ENCODE measurements at regions of chr12 and their contacts with region 1.

Region 1: DNA sequence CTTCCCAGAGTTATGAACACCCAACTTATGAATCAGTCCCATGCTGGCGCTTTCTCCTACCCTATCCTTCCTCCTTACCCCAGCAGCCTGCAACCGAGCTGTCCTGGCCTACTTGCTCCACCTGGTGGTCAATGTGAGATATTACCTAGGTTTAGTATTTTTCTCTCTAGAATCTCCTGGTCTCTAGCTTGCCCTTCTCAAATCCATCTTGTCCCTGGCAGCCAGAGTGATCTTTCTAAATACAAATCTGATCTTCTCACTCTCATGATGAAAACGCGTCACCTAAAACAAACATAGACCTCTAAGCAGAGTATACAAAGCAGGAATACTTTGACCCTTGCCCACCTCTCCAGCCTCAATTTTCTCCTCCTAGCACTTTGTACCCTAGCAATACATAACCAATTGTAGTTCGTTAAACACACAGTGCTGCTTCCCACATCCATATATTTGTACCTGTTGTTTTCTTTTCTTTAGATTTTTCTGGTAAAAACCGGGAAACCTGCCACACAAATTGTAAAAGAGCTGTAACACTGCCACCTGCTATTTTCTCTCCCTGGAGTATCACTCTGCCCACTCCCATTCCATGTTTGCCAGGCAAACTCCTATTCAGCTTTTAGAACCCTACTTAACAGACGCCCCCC is 20.0 kb upstream of the TCP11L2 start:
- DNase-seq: peak; percentile 65
- H3K4me3 Mint-ChIP-seq: no peak overlapping the region
- H3K27ac Mint-ChIP-seq: no peak overlapping the region
- H3K4me1 Mint-ChIP-seq: peaks cover 20% of the 10 kb centered on the region
- H3K27me3 Mint-ChIP-seq: peaks cover 1% of the 10 kb centered on the region

Region 2: GRCh38 chr12:105420659-105421240 is 861.8 kb before region 1 on chr12:
- CTCF ChIA-PET with region 1: no interaction called
- POLR2A ChIA-PET with region 1: no interaction called
- intact Hi-C with region 1: loop called (anchors 5 kb)
- DNase-seq: peak; percentile 75
- H3K4me3 Mint-ChIP-seq: no peak overlapping the region
- H3K27ac Mint-ChIP-seq: no peak overlapping the region
- H3K4me1 Mint-ChIP-seq: peaks cover 6% of the 10 kb centered on the region
- H3K27me3 Mint-ChIP-seq: no peaks in the 10 kb centered on the region

Region 3: GRCh38 chr12:106247674-106248311 is 34.8 kb before region 1 on chr12 and contains the start of gene CKAP4:
- CTCF ChIA-PET with region 1: interaction called, 7 read pairs
- POLR2A ChIA-PET with region 1: no interaction called
- intact Hi-C with region 1: loop called (anchors 2 kb)
- DNase-seq: peak; percentile 61
- H3K4me3 Mint-ChIP-seq: peak within 1 kb of the TSS; percentile 76
- H3K27ac Mint-ChIP-seq: peak within 1 kb of the TSS; percentile 69
- H3K4me1 Mint-ChIP-seq: peaks cover 24% of the 10 kb centered on the region
- H3K27me3 Mint-ChIP-seq: no peaks in the 10 kb centered on the region
- total RNA-seq, gene CKAP4: 18.5 to 19.0 TPM

Region 4: DNA sequence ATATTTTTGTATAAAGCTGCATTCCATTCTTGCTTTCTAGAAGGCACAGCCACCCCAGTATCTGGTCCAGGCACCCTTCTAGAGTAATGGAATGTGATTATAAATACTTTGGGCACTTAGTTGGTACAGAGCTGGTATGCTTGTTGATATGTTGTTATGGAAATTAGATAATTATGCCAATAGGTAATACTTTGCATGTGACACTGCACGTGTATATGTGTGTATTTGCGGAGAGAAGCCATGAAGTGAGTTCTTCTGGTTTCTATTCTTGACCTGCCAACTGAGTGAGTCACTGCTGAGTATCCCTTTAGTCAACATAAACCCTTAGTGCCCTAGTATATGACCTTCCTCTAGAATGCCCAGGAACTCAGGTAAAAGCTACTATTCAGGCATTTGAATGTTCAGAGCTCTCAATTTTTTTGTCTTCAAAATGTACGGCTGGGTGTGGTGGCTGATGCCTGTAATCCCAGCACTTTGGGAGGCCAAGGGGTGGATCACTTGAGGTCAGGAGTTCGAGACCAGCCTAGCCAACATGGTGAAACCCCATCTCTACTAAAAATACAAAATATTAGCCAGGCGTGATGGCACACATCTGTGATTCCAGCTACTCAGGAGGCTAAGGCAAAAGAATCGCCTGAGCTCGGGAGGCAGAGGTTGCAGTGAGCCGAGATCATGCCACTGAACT is 13.8 kb after region 1 on chr12:
- CTCF ChIA-PET with region 1: interaction called, 48 read pairs
- POLR2A ChIA-PET with region 1: no interaction called
- intact Hi-C with region 1: no loop called
- DNase-seq: no peak
- H3K4me3 Mint-ChIP-seq: no peak overlapping the region
- H3K27ac Mint-ChIP-seq: no peak overlapping the region
- H3K4me1 Mint-ChIP-seq: peaks cover 10% of the 10 kb centered on the region
- H3K27me3 Mint-ChIP-seq: no peaks in the 10 kb centered on the region

Region 5: DNA sequence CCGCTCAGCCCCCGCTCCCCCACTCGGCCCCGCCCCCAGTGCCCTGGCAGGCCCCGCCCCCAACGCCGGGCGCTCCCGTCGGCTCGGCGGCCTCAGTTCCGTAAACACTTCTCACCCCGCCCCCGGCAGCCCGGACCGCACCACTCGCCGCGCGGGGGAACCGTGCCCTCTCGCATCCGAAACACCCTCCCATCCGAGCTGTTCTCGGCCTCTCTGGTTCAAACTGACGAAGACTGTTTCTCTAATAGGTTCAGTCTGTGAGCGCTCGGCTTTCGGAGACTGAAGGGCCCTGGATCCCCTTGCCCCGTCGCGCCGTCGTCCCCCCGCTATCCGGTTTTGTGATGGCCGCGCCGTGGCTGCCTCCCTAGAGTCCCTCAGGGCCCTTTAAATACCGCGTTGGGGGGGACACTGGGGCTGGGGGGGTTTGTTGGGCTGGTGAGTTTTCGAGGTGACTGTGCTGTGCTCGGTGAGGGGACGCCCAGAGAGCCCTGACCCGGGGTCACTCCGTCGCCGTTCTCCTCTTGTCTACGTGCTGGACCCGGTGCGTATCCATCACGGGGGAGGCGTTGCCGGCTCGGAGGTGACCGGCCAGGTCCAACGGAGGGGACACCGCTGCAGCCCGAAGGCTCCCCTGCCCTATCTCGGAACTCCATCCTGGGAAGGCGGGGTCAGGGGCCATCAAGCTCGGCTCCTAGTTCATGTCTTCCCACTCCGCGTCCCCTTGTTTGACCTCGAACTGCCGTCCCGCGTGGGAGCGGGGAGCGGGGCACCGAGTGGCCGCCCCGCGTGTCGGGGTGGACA is 20.0 kb after region 1 on chr12 and contains the start of gene TCP11L2:
- CTCF ChIA-PET with region 1: interaction called, 48 read pairs
- POLR2A ChIA-PET with region 1: interaction called, 3 read pairs
- intact Hi-C with region 1: no loop called
- DNase-seq: peak; percentile 91
- H3K4me3 Mint-ChIP-seq: peak within 1 kb of the TSS; percentile 89
- H3K27ac Mint-ChIP-seq: peak within 1 kb of the TSS; percentile 99
- H3K4me1 Mint-ChIP-seq: peaks cover 52% of the 10 kb centered on the region
- H3K27me3 Mint-ChIP-seq: no peaks in the 10 kb centered on the region
- total RNA-seq, gene TCP11L2: 8.8 to 10.3 TPM

Region 6: GRCh38 chr12:106648736-106649135 is 366.2 kb after region 1 on chr12:
- CTCF ChIA-PET with region 1: no interaction called
- POLR2A ChIA-PET with region 1: no interaction called
- intact Hi-C with region 1: no loop called
- DNase-seq: no peak
- H3K4me3 Mint-ChIP-seq: no peak overlapping the region
- H3K27ac Mint-ChIP-seq: no peak overlapping the region
- H3K4me1 Mint-ChIP-seq: no peaks in the 10 kb centered on the region
- H3K27me3 Mint-ChIP-seq: peaks cover 5% of the 10 kb centered on the region